Esophagus muscularis mucosa (tissue), 4 donors: ENCODE measurements at regions of chr11 and their contacts with region 1.

Region 1: DNA sequence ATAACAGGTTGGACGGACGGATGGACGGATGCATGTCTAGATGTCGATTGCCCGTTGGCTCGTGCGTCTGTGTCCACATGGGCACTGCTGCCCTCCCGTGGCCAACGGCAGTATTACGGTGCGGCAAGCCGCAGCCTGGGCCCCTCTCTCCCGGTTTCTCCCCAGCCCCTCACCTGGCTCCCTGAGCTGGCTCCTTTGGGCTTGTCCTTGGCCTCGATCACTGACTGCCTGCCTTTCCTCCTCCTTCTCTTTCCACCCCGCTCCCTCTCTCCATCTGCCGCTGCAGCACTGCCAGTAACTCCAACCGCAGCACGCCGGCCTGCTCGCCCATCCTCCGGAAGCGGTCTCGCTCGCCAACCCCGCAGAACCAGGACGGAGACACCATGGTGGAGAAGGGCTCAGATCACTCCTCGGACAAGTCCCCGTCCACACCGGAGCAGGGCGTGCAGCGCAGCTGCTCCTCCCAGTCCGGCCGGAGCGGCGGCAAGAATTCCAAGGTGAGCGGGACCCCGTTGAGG is 77.3 kb downstream of the SCN3B start:
- DNase-seq: no peak
- H3K4me3 ChIP-seq: no peak overlapping the region
- H3K27ac ChIP-seq: no peak overlapping the region
- H3K4me1 ChIP-seq: peaks cover 0 to 18% (median 11%) of the 10 kb centered on the region in 4 donors
- H3K27me3 ChIP-seq: peaks cover 0 to 36% (median 2%) of the 10 kb centered on the region in 4 donors
- CTCF ChIP-seq: peak; percentile 78 to 93 (median 86)
- EP300 ChIP-seq: no peak
- POLR2A ChIP-seq: no peak

Region 2: GRCh38 chr11:123511037-123511870 is 65.9 kb before region 1 on chr11:
- intact Hi-C with region 1: loop called (anchors 5 kb)
- DNase-seq: no peak
- H3K4me3 ChIP-seq: no peak overlapping the region
- H3K27ac ChIP-seq: no peak overlapping the region
- H3K4me1 ChIP-seq: peaks cover 0 to 6% (median 2%) of the 10 kb centered on the region in 4 donors
- H3K27me3 ChIP-seq: peaks cover 0 to 27% (median 0%) of the 10 kb centered on the region in 4 donors
- CTCF ChIP-seq: peak; percentile 73 to 94 (median 78)
- EP300 ChIP-seq: no peak
- POLR2A ChIP-seq: no peak

Region 3: DNA sequence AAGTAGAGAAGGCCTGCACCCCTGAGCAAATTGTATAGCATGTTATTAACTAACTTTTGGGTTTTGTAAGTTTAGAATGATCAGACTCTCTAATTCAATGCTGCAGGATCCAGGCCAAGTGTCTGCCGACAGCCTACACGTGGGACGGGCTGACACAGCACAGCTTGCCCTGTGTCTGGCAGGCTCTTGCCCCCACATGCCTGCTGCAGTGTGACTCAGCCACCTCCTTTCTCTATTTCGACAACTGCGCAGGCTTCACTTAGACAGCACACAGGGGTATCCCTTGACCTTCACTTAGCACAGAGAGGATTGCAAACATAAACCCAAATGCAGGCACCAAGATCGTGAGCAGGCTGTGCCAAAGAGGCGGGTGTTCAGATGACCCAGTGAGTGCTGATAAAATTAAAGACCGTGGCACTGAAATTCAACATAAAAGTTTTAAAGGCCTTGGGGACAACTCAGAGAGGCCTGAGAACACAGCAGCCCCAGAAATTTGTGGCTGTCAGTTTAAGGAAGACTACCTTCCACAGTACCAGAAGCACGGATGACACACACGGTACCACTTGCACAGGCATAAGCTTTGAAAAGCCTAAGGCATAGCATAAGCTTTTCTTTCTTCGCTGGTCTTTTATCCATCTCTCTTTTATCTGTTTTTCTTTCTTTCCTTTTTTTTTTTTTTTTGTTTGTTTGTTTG is 39.5 kb after region 1 on chr11:
- intact Hi-C with region 1: no loop called
- DNase-seq: no peak
- H3K4me3 ChIP-seq: no peak overlapping the region
- H3K27ac ChIP-seq: peak overlapping the region in 3 of 4 donors; percentile 4 to 50 (median 34)
- H3K4me1 ChIP-seq: peaks cover 3 to 14% (median 10%) of the 10 kb centered on the region in 4 donors
- H3K27me3 ChIP-seq: no peaks in the 10 kb centered on the region
- CTCF ChIP-seq: no peak
- EP300 ChIP-seq: no peak
- POLR2A ChIP-seq: no peak

Region 4: DNA sequence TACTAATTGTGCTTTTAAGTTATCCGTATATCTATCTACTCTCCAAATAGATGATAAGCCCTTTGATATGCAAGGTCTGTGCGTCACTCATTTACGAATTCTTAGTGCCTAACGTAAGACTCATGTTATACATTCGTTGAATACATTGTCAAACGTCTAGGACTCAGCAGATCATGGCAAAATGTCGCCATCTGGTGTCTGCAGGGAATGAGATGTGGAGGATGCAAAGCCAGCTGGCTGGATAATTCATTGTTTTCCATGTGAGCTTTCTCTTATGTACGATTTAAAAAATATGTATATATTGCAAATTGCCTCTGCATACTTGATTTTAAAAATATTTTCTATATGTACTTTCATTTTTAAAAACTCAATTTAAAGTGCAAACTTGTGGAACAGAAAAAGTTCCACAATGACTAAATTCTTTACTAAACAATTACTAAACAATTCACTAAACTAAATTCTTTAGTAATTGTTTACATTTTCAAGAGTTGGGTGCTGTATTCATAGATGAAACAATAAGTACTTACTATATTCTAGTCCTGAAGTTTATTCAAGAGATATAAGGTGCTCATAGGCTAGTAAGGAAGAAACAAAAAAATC is 130.6 kb after region 1 on chr11:
- intact Hi-C with region 1: loop called (anchors 1 kb)
- DNase-seq: no peak
- H3K4me3 ChIP-seq: no peak overlapping the region
- H3K27ac ChIP-seq: no peak overlapping the region
- H3K4me1 ChIP-seq: no peaks in the 10 kb centered on the region
- H3K27me3 ChIP-seq: peaks cover 0 to 14% (median 0%) of the 10 kb centered on the region in 4 donors
- CTCF ChIP-seq: peak; percentile 54 to 62 (median 56)
- EP300 ChIP-seq: no peak
- POLR2A ChIP-seq: no peak